ENCODE measurements at regions of chr7 and their contacts with region 1.

Region 1: DNA sequence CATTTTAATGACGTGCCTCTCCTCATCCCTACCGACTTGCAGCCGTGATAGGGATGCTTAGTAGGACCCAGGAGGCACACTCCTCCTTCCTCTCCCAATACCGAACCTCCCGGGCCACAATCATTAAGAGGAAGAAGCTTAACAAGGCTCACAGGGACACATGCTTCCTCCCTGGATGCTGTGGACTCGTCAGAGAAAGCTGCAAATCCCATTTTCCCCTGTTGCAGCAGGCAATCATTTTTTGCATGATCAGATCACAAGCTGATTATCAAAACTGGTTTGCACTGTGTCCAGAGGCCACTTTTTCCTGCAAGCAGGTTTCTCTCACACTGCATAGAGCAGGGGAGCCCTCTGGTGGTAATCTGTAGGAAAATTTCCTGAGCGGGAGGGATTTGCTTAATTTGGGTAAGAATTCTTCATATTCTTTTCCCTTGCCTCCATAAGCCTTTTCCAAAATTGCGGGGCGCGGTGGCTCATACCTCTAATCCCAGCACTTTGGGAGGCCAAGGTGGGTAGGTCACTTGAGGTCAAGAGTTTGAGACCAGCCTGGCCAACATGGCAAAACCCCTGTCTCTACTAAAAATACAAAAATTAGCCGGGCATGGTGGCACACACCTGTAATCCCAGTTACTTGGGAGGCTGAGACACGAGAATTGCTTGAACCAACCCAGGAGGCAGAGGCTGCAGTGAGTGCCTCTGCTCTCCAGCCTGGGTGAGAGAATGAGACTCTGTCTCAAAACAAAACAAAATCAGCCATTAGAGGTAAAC is 16.1 kb upstream of the LAMB4 start:
- DNase-seq: peak; percentile 71
- ATAC-seq: peak; percentile 79
- H3K4me3 Mint-ChIP-seq: no peak overlapping the region
- H3K27ac Mint-ChIP-seq: no peak overlapping the region
- H3K4me1 Mint-ChIP-seq: no peaks in the 10 kb centered on the region
- H3K27me3 Mint-ChIP-seq: no peaks in the 10 kb centered on the region
- CTCF ChIP-seq: peak; percentile 91

Region 2: DNA sequence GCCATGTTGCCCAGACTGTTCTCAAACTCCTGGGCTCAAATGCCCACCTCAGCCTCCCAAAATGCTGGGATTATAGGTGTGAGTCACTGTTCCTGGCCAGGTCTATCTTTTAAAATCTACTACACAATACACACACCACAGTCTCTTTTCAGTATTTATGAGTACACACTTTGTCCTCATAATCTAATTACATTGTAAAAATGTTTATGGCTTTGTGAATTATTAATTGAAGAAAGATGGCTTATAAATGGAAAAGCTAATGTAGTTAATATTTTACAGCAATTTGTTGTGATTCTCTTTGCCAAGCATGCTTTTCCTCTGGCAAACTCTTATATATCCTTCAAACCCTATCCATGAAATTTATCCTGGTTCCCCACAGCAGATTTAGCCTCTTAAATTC is 38.1 kb before region 1 on chr7:
- CTCF ChIA-PET with region 1: interaction called, 53 read pairs
- POLR2A ChIA-PET with region 1: no interaction called
- intact Hi-C with region 1: no loop called
- DNase-seq: no peak
- ATAC-seq: no peak
- H3K4me3 Mint-ChIP-seq: no peak overlapping the region
- H3K27ac Mint-ChIP-seq: no peak overlapping the region
- H3K4me1 Mint-ChIP-seq: no peaks in the 10 kb centered on the region
- H3K27me3 Mint-ChIP-seq: no peaks in the 10 kb centered on the region
- CTCF ChIP-seq: no peak

Region 3: GRCh38 chr7:108114117-108114841 is 32.0 kb before region 1 on chr7:
- CTCF ChIA-PET with region 1: interaction called, 53 read pairs
- POLR2A ChIA-PET with region 1: no interaction called
- intact Hi-C with region 1: loop called (anchors 1 kb)
- DNase-seq: peak; percentile 48
- ATAC-seq: peak; percentile 84
- H3K4me3 Mint-ChIP-seq: no peak overlapping the region
- H3K27ac Mint-ChIP-seq: no peak overlapping the region
- H3K4me1 Mint-ChIP-seq: no peaks in the 10 kb centered on the region
- H3K27me3 Mint-ChIP-seq: no peaks in the 10 kb centered on the region
- CTCF ChIP-seq: peak; percentile 81

Region 4: GRCh38 chr7:108120933-108121332 is 25.3 kb before region 1 on chr7:
- CTCF ChIA-PET with region 1: interaction called, 27 read pairs
- POLR2A ChIA-PET with region 1: no interaction called
- intact Hi-C with region 1: no loop called
- DNase-seq: no peak
- ATAC-seq: no peak
- H3K4me3 Mint-ChIP-seq: no peak overlapping the region
- H3K27ac Mint-ChIP-seq: no peak overlapping the region
- H3K4me1 Mint-ChIP-seq: no peaks in the 10 kb centered on the region
- H3K27me3 Mint-ChIP-seq: no peaks in the 10 kb centered on the region
- CTCF ChIP-seq: no peak

Region 5: DNA sequence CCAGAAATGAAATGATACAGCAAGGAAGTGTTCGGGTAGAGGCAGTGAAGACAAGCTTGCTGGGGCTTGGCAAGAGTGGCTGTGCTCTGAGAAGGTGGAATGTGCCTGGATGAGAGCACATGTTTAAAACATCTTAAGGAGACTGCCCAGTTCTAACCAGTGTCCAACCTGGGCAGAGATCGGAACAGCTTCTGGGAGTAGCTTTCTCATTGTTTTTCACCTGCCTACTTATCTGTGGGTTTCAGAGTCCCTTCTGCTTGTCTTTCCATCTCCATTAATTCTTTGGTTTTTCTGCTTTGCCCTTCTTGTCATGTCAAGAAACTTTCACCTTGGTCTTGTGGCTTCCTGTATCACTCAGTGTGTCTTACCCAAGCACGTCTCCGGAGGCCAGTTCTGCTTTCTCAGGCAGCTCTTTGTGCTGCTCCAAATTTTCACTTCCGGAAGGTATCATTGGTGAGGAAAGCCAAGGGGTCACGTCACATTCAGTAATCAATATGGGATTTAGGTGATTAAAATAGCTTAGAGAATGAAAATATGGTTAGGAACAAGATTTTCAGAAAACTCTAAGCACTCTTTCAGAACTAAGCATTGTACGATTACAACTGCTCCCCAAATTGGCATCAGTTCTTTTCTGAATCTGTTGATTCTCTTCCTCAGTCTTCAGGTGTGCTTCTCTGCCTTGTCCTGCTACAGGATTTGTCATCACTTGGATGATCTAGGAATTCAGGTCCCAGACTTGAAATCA is 10.6 kb before region 1 on chr7:
- CTCF ChIA-PET with region 1: interaction called, 37 read pairs
- POLR2A ChIA-PET with region 1: no interaction called
- intact Hi-C with region 1: no loop called
- DNase-seq: peak; percentile 74
- ATAC-seq: peak; percentile 87
- H3K4me3 Mint-ChIP-seq: peak overlapping the region; percentile 34
- H3K27ac Mint-ChIP-seq: peak overlapping the region; percentile 96
- H3K4me1 Mint-ChIP-seq: peaks cover 30% of the 10 kb centered on the region
- H3K27me3 Mint-ChIP-seq: peaks cover 12% of the 10 kb centered on the region
- CTCF ChIP-seq: no peak